Activated T-helper 1 cell treated with anti-CD3 and anti-CD28 coated beads, Interleukin-12 subunit alpha, Interleukin-12 subunit beta, Interleukin-2, Interleukin-4 antibody, amounts not matched to agents 30 ng/mL and 10 ng/mL and 1 ng/mL, durations not matched to agents 14 hours and 24 hours and 36 hours (primary cell): ENCODE measurements at regions of chr10 and their contacts with region 1.

Region 1: DNA sequence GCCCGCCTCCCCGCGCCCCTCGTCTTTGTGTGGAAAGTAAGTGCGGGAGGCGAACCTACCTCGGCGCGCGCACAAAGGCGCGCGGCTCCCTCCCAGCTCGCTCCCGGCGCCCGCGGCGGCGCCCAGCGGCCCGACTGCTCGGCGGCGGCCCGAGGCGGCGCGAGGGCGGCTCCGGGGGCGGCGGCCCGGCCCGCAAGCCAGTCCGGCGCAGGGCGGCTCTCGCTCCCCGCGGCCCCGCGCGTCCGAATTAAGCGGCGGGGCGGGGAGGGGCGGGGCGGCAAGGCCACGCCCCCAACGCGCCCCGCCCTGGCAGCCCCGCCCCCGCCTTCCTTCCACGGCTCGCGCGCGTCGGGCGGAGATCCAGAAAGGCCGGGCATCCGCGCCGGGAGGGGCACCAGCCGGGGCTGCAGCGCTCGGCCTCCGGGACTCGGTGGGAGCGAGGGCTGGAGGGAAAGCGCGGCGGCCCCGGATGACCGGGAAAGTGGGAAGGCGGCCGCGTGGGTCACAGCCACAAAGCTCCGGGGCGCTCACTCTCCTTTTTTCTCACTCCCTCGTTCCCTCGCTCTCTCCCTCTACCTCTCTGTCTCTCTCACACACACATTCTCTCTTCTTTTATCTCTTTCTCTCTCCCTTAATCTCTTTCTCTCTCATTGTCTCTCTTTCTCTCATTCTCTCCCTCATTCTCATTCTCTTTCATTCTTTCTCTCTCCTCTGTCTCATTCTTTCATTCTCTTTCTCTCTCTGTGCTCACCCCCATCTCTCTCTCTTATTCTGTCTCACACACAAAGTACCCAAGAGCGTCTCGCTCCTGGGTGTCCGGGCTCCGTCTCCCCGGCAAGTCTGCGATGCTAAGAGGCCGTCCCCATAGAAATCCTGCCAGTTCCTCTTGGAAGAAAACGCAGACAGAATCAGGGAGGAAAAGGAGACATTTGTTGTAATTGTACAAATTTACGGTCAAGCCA is 170.2 kb downstream of the FAM107B start:
- DNase-seq: peak; percentile 72
- H3K4me3 Mint-ChIP-seq: peak overlapping the region; percentile 91
- H3K27ac Mint-ChIP-seq: peak overlapping the region; percentile 99
- H3K4me1 Mint-ChIP-seq: peaks cover 78% of the 10 kb centered on the region
- H3K27me3 Mint-ChIP-seq: no peaks in the 10 kb centered on the region

Region 2: DNA sequence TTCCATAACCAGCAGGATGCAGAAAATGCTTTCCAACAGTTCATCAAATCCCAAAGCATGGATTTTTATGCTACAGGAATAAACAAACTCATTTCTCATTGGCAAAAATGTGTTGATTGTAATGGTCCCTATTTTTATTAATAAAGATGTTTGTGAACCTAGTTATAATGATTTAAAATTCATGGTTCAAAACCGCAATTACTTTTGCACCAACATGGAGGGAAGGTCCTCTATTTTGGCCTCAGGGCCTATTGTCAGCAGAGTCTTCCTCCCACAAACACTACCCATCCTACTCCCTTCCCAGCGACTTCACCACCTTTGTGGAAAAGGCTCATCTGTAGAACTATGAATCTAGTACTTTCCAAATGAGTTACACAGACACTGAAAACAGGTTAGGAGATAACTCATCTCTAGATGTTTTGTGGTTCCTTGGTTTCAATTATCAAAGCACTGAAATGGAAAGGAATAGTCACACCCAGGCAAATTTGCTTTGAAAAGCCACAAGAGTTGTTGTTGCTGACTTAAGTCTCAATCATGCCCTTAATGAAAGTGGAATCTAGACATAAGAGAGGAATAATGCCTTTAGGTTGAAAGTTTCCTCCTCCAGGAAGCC is 214.4 kb before region 1 on chr10:
- intact Hi-C with region 1: loop called (anchors 1 kb)
- DNase-seq: peak; percentile 14
- H3K4me3 Mint-ChIP-seq: no peak overlapping the region
- H3K27ac Mint-ChIP-seq: peak overlapping the region; percentile 58
- H3K4me1 Mint-ChIP-seq: peaks cover 33% of the 10 kb centered on the region
- H3K27me3 Mint-ChIP-seq: peaks cover 43% of the 10 kb centered on the region

Region 3: GRCh38 chr10:14405076-14406065 is 199.1 kb before region 1 on chr10:
- intact Hi-C with region 1: no loop called
- DNase-seq: no peak
- H3K4me3 Mint-ChIP-seq: no peak overlapping the region
- H3K27ac Mint-ChIP-seq: no peak overlapping the region
- H3K4me1 Mint-ChIP-seq: peaks cover 10% of the 10 kb centered on the region
- H3K27me3 Mint-ChIP-seq: peaks cover 28% of the 10 kb centered on the region

Region 4: GRCh38 chr10:14583252-14583651 is 21.2 kb before region 1 on chr10:
- intact Hi-C with region 1: loop called (anchors 1 kb)
- DNase-seq: peak; percentile 79
- H3K4me3 Mint-ChIP-seq: peak overlapping the region; percentile 48
- H3K27ac Mint-ChIP-seq: peak overlapping the region; percentile 89
- H3K4me1 Mint-ChIP-seq: peaks cover 86% of the 10 kb centered on the region
- H3K27me3 Mint-ChIP-seq: no peaks in the 10 kb centered on the region

Region 5: GRCh38 chr10:14659626-14660196 is 55.2 kb after region 1 on chr10:
- intact Hi-C with region 1: loop called (anchors 1 kb)
- DNase-seq: peak; percentile 59
- H3K4me3 Mint-ChIP-seq: peak overlapping the region; percentile 46
- H3K27ac Mint-ChIP-seq: peak overlapping the region; percentile 92
- H3K4me1 Mint-ChIP-seq: peaks cover 81% of the 10 kb centered on the region
- H3K27me3 Mint-ChIP-seq: no peaks in the 10 kb centered on the region

Region 6: DNA sequence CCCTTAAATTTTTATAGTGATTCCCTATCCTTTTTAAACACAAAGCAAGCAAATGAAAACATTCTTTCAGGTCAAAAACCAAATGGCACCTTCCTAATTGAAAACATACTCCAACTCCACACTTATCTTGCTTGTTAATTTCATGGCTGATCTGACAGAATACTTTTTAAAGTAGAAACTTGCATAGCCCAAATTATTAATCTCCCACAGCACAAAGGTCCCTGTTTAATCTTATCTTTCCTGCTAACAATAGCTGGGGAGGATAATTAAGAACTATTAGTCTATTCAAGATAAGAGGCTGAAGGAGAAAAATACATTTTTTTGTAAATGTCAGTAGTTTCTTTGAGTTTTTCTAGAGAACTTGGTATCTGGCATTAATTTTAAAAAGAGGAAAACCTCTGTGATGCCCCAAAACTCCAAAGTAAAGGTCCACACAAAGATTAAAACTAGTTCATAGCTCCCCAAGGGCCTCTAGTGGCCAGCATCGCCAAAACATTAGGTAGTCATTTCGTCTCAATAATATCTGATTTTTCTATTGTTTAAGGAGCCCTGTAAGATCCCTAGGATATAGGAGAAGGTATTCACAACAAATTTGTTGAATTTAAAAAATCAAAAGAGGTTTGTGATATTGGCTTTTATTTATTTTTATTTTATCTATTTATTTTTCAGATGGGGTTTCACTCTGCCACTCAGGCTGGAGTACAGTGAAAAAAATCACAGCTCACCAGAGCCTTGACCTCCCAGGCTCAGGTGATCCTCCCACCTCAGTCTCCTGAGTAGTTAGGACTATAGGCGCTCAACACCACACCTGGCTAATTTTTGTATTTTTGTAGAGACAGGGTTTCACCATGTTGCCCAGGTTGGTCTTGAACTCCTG is 218.7 kb after region 1 on chr10:
- intact Hi-C with region 1: loop called (anchors 1 kb)
- DNase-seq: no peak
- H3K4me3 Mint-ChIP-seq: no peak overlapping the region
- H3K27ac Mint-ChIP-seq: no peak overlapping the region
- H3K4me1 Mint-ChIP-seq: peaks cover 22% of the 10 kb centered on the region
- H3K27me3 Mint-ChIP-seq: peaks cover 9% of the 10 kb centered on the region

Region 7: DNA sequence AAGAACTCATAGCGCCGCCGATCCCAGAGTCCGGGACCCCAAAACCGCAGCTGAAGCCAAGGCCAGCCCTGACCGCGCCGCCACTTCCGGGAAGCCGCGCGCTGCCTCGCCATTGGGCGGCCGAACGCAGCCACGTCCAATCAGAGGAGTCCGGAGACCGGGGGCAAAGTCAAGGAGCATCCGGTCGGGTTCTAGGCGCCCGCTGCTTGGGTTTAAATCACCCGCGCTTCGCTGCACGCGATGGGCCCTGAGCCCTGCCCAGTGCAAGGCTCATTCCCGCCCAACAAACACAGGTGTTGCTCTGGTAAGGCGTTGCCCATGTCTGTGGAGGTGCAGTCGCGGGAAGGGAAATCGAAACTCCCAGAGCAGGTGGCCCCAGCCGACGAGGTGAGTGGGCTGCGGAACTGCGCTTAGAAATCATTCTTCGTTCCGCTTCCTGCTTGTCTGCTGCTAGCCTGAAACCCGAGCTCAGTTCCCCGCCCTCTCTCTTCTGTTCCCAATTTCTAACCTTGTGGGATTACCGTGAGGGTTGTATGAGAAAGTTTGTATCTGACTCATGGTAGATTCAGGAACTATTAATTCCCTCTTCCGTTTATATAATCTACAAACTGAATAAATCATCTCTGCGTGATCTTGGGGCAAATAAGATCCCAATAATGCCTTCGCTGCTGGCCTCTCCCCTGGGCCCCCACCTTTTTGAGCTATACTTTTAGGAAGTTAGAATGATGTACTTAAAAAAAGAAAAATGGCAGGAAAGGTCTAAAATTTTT is 349.7 kb after region 1 on chr10 and contains the start of gene DCLRE1C:
- intact Hi-C with region 1: loop called (anchors 5 kb)
- DNase-seq: peak; percentile 89
- H3K4me3 Mint-ChIP-seq: peak within 1 kb of the TSS; percentile 94
- H3K27ac Mint-ChIP-seq: peak within 1 kb of the TSS; percentile 95
- H3K4me1 Mint-ChIP-seq: peaks cover 57% of the 10 kb centered on the region
- H3K27me3 Mint-ChIP-seq: no peaks in the 10 kb centered on the region
- total RNA-seq, gene DCLRE1C: 15.5 and 20.9 TPM in 2 replicates